Panc1 (cell line): ENCODE measurements at regions of chr3 and their contacts with region 1.

Region 1: DNA sequence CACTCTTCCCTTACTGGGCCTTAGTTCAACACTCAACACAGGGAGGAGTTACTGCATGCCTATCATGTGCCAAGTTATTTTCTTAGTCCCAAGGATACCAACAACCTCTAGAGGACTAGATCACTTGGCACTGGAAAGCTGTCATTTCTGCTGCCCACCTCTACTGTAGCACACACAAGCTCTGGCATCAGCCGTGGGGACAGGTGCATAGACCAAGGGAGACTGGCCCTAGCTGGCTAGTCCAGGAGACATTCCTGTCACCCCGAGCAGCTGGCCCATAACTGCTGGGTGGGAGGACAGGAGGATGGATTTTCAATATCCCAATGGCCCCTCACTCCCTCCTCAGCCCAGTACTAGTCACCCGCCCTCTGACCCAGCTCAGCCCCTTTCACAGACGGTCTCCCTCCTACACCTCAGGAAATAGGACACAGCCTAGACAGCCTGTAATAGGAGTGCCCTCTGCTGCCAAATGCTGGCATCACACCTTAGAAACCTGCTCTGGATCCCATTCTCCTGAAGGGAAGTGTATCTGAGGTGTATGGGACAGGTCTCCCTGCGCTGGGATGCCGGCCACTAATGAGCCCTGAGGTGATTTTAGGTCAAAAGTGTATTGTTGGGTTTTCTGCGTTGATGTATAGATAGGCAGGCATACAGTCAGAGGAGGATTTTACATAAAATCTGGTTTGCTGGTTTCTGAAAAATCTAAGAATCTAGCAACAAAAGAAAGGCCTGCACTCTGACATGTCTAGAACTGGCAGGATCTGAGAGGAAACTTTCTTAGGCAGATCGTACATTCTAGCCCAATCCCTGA is 3.4 kb upstream of the DZIP1L start:
- DNase-seq: peak; percentile 72
- ATAC-seq: peak; percentile 80
- H3K4me3 ChIP-seq: no peak overlapping the region
- H3K27ac ChIP-seq: no peak overlapping the region
- H3K4me1 ChIP-seq: peaks cover 9% of the 10 kb centered on the region
- H3K27me3 ChIP-seq: no peaks in the 10 kb centered on the region
- CTCF ChIP-seq: peak; percentile 96

Region 2: DNA sequence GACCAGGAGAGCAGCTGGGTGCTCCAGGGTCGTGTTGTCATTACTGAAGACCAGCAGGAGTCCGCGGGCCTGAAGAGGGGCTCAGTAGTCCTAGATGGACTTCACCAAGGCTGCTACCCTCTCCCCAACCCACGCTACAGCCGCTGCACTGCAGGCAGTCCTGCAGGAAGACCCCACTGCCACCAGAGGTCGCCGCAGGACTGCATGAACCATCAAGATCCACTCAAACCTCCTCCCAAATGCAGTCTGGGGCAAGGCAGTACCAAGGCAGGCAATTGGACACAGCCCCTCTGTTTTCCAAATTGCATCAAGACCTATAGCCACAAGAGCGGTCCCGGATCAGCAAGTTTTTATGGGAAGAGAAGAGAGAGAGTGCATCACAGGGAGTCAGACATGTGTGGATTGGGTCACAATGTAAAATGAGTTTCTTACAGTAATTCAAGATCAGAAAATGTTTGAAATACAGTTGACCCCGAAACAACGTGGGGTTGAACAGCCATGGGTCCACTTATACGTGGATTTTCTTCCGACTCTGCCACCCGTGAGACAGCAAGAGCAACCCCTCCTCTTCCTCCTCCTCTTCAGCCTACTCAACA is 50.1 kb before region 1 on chr3:
- CTCF ChIA-PET with region 1: interaction called, 7 read pairs
- POLR2A ChIA-PET with region 1: no interaction called
- in situ Hi-C with region 1: no loop called
- intact Hi-C with region 1: loop called (anchors 1 kb)
- DNase-seq: peak; percentile 78
- ATAC-seq: peak; percentile 97
- H3K4me3 ChIP-seq: no peak overlapping the region
- H3K27ac ChIP-seq: no peak overlapping the region
- H3K4me1 ChIP-seq: peaks cover 4% of the 10 kb centered on the region
- H3K27me3 ChIP-seq: no peaks in the 10 kb centered on the region
- CTCF ChIP-seq: peak; percentile 99